ENCODE measurements at regions of chr5 and their contacts with region 1.

Region 1: DNA sequence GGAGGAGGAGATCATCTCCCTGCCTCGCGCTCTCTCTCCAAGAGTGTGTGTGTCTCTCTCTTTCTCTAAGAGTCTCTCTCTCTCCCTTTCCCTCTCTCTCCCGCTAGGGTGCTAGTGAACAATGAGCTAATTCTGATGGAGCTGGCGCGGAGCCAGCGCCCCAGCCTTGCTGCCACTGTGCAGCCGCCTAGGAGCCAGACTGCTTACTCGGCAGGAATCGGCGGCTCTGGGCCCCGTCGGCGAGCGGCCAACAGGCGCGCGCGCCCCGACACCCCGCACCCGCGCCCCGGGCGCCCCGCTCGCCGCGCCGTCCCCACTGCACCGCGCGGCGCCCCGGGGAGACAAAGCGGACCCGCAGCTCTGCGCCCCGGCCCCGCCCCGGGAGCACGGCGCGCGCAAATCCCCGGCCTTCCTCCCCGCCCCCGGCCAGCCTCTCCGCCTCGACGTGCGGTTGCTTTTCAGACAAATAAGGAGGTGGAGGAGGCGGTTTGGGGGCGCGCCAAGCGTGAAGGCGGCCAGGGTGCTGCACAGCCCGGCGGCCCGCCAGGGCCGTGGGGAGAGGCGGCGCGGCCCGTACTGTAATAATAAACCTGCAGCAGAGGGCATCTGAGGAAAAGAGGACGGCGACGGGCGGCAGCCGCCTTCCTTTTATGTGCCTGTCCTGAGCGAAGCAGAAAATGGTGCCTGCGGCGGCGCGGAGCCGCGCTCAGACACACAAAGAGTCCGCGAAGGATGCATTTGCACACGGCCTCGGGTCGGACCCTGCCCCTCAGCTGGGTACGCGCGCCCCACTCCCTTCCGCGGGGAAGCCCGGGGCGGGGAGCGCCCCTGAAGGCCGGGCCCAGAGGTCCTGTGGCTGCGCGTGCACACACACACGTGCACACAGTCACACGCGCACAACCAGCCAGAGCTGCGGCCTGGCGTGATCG is 625 bp upstream of the NREP start:
- DNase-seq: peak; percentile 81
- ATAC-seq: peak; percentile 81
- H3K4me3 Mint-ChIP-seq: peak overlapping the region; percentile 88
- H3K27ac Mint-ChIP-seq: peak overlapping the region; percentile 91
- H3K4me1 Mint-ChIP-seq: peaks cover 23% of the 10 kb centered on the region
- H3K27me3 Mint-ChIP-seq: no peaks in the 10 kb centered on the region
- CTCF ChIP-seq: no peak

Region 2: GRCh38 chr5:110757118-110757729 is 1000.4 kb before region 1 on chr5:
- CTCF ChIA-PET with region 1: no interaction called
- POLR2A ChIA-PET with region 1: no interaction called
- intact Hi-C with region 1: loop called (anchors 10 kb)
- DNase-seq: no peak
- ATAC-seq: no peak
- H3K4me3 Mint-ChIP-seq: no peak overlapping the region
- H3K27ac Mint-ChIP-seq: no peak overlapping the region
- H3K4me1 Mint-ChIP-seq: peaks cover 9% of the 10 kb centered on the region
- H3K27me3 Mint-ChIP-seq: no peaks in the 10 kb centered on the region
- CTCF ChIP-seq: peak; percentile 65

Region 3: GRCh38 chr5:111223889-111224563 is 533.6 kb before region 1 on chr5 and contains the start of gene CAMK4:
- CTCF ChIA-PET with region 1: no interaction called
- POLR2A ChIA-PET with region 1: interaction called, 11 read pairs
- intact Hi-C with region 1: loop called (anchors 5 kb)
- DNase-seq: peak; percentile 52
- ATAC-seq: peak; percentile 88
- H3K4me3 Mint-ChIP-seq: peak within 1 kb of the TSS; percentile 82
- H3K27ac Mint-ChIP-seq: no peak within 1 kb of the TSS
- H3K4me1 Mint-ChIP-seq: peaks cover 20% of the 10 kb centered on the region
- H3K27me3 Mint-ChIP-seq: peaks cover 16% of the 10 kb centered on the region
- CTCF ChIP-seq: no peak
- total RNA-seq, gene CAMK4: 5.1 and 6.3 TPM in 2 replicates

Region 4: GRCh38 chr5:111550279-111551020 is 207.2 kb before region 1 on chr5:
- CTCF ChIA-PET with region 1: interaction called, 3 read pairs
- POLR2A ChIA-PET with region 1: interaction called, 14 read pairs
- intact Hi-C with region 1: loop called (anchors 2 kb)
- DNase-seq: peak; percentile 27
- ATAC-seq: peak; percentile 76
- H3K4me3 Mint-ChIP-seq: no peak overlapping the region
- H3K27ac Mint-ChIP-seq: no peak overlapping the region
- H3K4me1 Mint-ChIP-seq: peaks cover 4% of the 10 kb centered on the region
- H3K27me3 Mint-ChIP-seq: peaks cover 5% of the 10 kb centered on the region
- CTCF ChIP-seq: peak; percentile 25

Region 5: GRCh38 chr5:111563031-111563822 is 194.4 kb before region 1 on chr5:
- CTCF ChIA-PET with region 1: no interaction called
- POLR2A ChIA-PET with region 1: no interaction called
- intact Hi-C with region 1: no loop called
- DNase-seq: no peak
- ATAC-seq: no peak
- H3K4me3 Mint-ChIP-seq: no peak overlapping the region
- H3K27ac Mint-ChIP-seq: no peak overlapping the region
- H3K4me1 Mint-ChIP-seq: no peaks in the 10 kb centered on the region
- H3K27me3 Mint-ChIP-seq: peaks cover 13% of the 10 kb centered on the region
- CTCF ChIP-seq: no peak

Region 6: DNA sequence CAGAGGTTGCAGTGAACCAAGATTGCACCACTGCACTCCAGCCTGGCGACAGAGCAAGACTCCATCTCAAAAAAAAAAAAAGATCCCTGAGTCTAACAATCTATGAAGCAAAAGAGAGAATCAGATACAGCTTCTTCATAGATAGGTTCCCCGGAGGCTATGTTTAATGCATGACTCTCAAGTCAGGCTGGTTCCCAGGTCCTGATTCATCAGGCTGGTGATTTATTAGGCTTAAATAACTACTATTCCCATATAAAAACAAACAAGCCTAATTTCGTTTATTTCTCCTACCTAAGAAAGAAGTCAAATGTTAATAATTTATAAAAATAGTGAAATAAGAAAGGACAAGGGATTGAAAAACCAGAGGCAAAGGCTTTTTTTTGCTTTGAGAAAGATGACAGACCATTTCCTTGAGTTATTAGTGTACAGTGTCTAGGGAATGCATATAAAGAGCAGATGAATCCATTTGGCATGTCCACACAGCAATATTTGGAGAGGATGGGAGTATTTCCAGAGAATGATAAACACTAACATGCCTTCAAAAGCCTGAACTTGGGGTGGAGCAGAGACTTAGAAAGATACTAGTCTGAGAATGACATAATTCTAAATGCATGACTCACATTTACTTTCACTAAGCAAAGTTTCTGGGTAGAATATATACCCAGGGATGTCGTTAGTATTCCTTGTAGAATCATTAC is 115.9 kb before region 1 on chr5:
- CTCF ChIA-PET with region 1: no interaction called
- POLR2A ChIA-PET with region 1: no interaction called
- intact Hi-C with region 1: no loop called
- DNase-seq: no peak
- ATAC-seq: no peak
- H3K4me3 Mint-ChIP-seq: no peak overlapping the region
- H3K27ac Mint-ChIP-seq: no peak overlapping the region
- H3K4me1 Mint-ChIP-seq: no peaks in the 10 kb centered on the region
- H3K27me3 Mint-ChIP-seq: no peaks in the 10 kb centered on the region
- CTCF ChIP-seq: no peak

Region 7: GRCh38 chr5:112146323-112147226 is 389.0 kb after region 1 on chr5:
- CTCF ChIA-PET with region 1: no interaction called
- POLR2A ChIA-PET with region 1: no interaction called
- intact Hi-C with region 1: loop called (anchors 5 kb)
- DNase-seq: no peak
- ATAC-seq: peak; percentile 96
- H3K4me3 Mint-ChIP-seq: no peak overlapping the region
- H3K27ac Mint-ChIP-seq: no peak overlapping the region
- H3K4me1 Mint-ChIP-seq: no peaks in the 10 kb centered on the region
- H3K27me3 Mint-ChIP-seq: peaks cover 1% of the 10 kb centered on the region
- CTCF ChIP-seq: peak; percentile 96

Region 8: GRCh38 chr5:112860929-112861637 is 1103.5 kb after region 1 on chr5 and contains the start of gene SRP19:
- CTCF ChIA-PET with region 1: no interaction called
- POLR2A ChIA-PET with region 1: no interaction called
- intact Hi-C with region 1: loop called (anchors 10 kb)
- DNase-seq: peak; percentile 83
- ATAC-seq: peak; percentile 94
- H3K4me3 Mint-ChIP-seq: peak within 1 kb of the TSS; percentile 96
- H3K27ac Mint-ChIP-seq: peak within 1 kb of the TSS; percentile 96
- H3K4me1 Mint-ChIP-seq: peaks cover 34% of the 10 kb centered on the region
- H3K27me3 Mint-ChIP-seq: peaks cover 4% of the 10 kb centered on the region
- CTCF ChIP-seq: no peak
- total RNA-seq, gene SRP19: 50.4 and 51.6 TPM in 2 replicates